Esophagus muscularis mucosa (tissue), 4 donors: ENCODE measurements at regions of chr2 and their contacts with region 1.

Region 1: DNA sequence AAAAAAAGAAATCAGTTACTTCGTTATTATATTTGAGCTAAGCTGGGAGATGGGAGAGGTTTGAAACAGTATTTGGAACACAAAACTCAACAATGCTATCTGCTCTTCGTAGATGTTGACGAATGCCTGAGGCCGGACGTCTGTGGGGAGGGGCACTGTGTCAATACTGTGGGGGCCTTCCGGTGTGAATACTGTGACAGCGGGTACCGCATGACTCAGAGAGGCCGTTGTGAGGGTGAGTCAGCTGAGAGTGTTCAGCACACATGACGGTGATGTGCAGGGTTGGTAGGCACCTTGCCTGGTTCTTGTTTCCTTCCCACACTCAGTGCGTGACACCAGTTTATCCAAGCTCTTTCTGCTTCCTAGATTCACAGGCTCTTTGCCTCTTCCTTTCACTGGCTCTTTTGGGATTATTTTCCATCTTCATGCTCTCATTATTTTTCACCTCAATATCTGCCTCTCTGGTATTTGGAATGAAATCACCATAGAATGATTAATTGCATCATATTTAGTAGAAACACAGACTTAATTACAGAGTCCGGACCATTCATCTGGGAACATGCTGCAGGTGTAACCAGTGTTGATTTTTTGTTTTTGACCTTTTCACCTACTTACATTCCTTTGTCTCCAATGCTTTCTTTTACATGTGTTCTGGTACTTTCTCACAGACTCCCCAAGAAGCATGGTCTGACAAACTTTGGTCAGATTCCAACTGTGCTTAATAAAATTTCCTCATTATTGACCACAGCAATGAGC is 200.6 kb upstream of the RASGRP3 start:
- DNase-seq: no peak
- H3K4me3 ChIP-seq: no peak overlapping the region
- H3K27ac ChIP-seq: peak overlapping the region; percentile 87 to 90 (median 88)
- H3K4me1 ChIP-seq: peaks cover 7 to 59% (median 52%) of the 10 kb centered on the region in 4 donors
- H3K27me3 ChIP-seq: no peaks in the 10 kb centered on the region
- CTCF ChIP-seq: no peak
- EP300 ChIP-seq: peak; percentile 38
- POLR2A ChIP-seq: no peak

Region 2: GRCh38 chr2:33134086-33134771 is 141.6 kb before region 1 on chr2:
- intact Hi-C with region 1: loop called (anchors 5 kb)
- DNase-seq: peak; percentile 93
- H3K4me3 ChIP-seq: peak overlapping the region; percentile 54 to 72 (median 62)
- H3K27ac ChIP-seq: peak overlapping the region; percentile 85 to 91 (median 90)
- H3K4me1 ChIP-seq: peaks cover 42 to 73% (median 69%) of the 10 kb centered on the region in 4 donors
- H3K27me3 ChIP-seq: no peaks in the 10 kb centered on the region
- CTCF ChIP-seq: peak in 1 of 3 experiments; percentile 25
- EP300 ChIP-seq: peak; percentile 31
- POLR2A ChIP-seq: peak; percentile 26

Region 3: DNA sequence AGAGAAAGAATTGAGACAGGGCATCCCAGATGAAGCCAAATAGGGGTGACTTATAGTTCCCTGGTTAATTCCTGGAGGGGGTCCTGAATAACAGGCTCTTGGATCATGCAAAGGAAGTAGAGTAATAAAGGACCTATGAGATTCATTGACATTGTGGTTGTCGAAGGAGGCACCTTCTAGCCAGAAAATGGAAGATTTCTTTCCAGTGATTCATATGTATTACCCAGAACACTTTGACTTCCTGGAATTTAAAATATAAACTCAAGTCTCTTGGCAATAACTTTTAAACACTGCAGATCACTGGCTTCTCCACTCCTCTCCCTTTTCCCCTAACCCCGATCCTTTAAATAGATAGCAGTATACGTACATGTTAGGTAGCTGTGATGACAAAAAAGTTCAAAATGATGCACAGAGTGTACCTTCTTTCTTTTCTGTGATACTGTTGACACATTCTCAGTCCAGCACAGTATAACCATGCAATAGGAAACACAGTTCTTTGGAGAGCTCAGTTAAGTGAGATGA is 117.3 kb before region 1 on chr2:
- intact Hi-C with region 1: loop called (anchors 5 kb)
- DNase-seq: no peak
- H3K4me3 ChIP-seq: peak overlapping the region in 1 of 4 donors; percentile 4
- H3K27ac ChIP-seq: peak overlapping the region; percentile 78 to 84 (median 82)
- H3K4me1 ChIP-seq: peaks cover 15 to 74% (median 60%) of the 10 kb centered on the region in 4 donors
- H3K27me3 ChIP-seq: no peaks in the 10 kb centered on the region
- CTCF ChIP-seq: no peak
- EP300 ChIP-seq: peak; percentile 91
- POLR2A ChIP-seq: no peak

Region 4: GRCh38 chr2:33441235-33441810 is 165.5 kb after region 1 on chr2:
- intact Hi-C with region 1: loop called (anchors 5 kb)
- DNase-seq: no peak
- H3K4me3 ChIP-seq: no peak overlapping the region
- H3K27ac ChIP-seq: peak overlapping the region in 1 of 4 donors; percentile 21
- H3K4me1 ChIP-seq: peaks cover 22 to 48% (median 32%) of the 10 kb centered on the region in 4 donors
- H3K27me3 ChIP-seq: no peaks in the 10 kb centered on the region
- CTCF ChIP-seq: peak; percentile 70 to 83 (median 83)
- EP300 ChIP-seq: no peak
- POLR2A ChIP-seq: no peak